Activated CD4-positive, alpha-beta T cell treated with anti-CD3 and anti-CD28 coated beads, Interleukin-2, amount 10 ng/mL, durations not matched to agents 24 days and 14 days (primary cell): ENCODE measurements at regions of chr7 and their contacts with region 1.

Region 1: GRCh38 chr7:139086454-139086853 is 23.1 kb downstream of the ZC3HAV1 start:
- DNase-seq: no peak
- H3K4me3 Mint-ChIP-seq: no peak overlapping the region
- H3K27ac Mint-ChIP-seq: peak overlapping the region; percentile 68
- H3K4me1 Mint-ChIP-seq: peaks cover 71% of the 10 kb centered on the region
- H3K27me3 Mint-ChIP-seq: no peaks in the 10 kb centered on the region

Region 2: GRCh38 chr7:139124084-139124914 is 37.8 kb after region 1 on chr7:
- intact Hi-C with region 1: loop called (anchors 5 kb)
- DNase-seq: peak; percentile 14
- H3K4me3 Mint-ChIP-seq: no peak overlapping the region
- H3K27ac Mint-ChIP-seq: no peak overlapping the region
- H3K4me1 Mint-ChIP-seq: peaks cover 26% of the 10 kb centered on the region
- H3K27me3 Mint-ChIP-seq: peaks cover 6% of the 10 kb centered on the region

Region 3: GRCh38 chr7:139203992-139204391 is 117.5 kb after region 1 on chr7:
- intact Hi-C with region 1: no loop called
- DNase-seq: no peak
- H3K4me3 Mint-ChIP-seq: no peak overlapping the region
- H3K27ac Mint-ChIP-seq: no peak overlapping the region
- H3K4me1 Mint-ChIP-seq: no peaks in the 10 kb centered on the region
- H3K27me3 Mint-ChIP-seq: peaks cover 16% of the 10 kb centered on the region